Endothelial cell of umbilical vein (primary cell): ENCODE measurements at regions of chr20 and their contacts with region 1.

Region 1: DNA sequence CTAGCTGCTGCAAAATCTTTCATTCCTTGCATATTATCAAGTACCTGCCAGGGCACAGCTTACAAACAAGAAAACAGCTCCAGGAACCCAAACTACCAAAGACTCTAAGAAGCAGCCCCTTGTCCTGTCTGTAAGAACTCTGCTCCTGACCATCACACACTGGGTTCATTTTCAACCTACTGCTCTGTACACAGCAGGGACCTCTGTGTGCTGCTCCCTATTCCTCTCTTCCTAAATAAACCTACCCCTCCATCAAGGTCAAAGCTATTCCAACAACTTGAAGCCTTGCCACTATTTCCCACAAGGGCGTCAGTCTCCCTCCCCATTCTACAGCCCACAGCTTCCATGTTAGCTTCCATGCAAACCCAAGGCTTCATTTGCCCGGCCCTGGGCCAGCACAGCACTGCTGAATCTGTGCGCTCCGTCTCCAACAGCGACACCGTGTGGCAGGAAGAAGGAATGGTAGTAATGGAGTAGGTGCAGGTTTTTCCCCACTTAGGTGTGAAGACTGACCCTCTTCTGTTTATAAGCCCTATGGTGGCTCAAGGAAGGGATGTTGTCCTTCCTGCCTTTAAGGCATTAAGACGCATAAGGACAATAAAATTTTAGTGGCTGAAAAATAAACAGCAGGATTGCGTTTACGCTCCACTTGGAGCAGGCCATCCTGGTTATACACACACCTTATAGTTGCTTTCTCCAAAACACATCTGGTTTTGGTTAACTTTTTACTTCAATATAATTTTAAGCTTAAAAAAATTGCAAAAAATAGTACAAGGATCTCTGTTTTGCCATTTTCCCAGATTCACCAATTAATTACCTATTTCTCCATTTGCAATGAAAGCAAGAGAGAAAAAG is 115.2 kb upstream of the NXT1 start:
- DNase-seq: peak; percentile 72
- H3K4me3 ChIP-seq: no peak overlapping the region
- H3K27ac ChIP-seq: no peak overlapping the region
- H3K4me1 ChIP-seq: peaks cover 5% of the 10 kb centered on the region
- H3K27me3 ChIP-seq: peaks cover 2 to 4% of the 10 kb centered on the region in 2 experiments
- CTCF ChIP-seq: peak; percentile 80 to 85
- POLR2A ChIP-seq: no peak

Region 2: GRCh38 chr20:22368235-22368634 is 867.2 kb before region 1 on chr20:
- CTCF ChIA-PET with region 1: no interaction called
- POLR2A ChIA-PET with region 1: no interaction called
- dilution Hi-C with region 1: no loop called
- intact Hi-C with region 1: no loop called
- DNase-seq: no peak
- H3K4me3 ChIP-seq: no peak overlapping the region
- H3K27ac ChIP-seq: no peak overlapping the region
- H3K4me1 ChIP-seq: no peaks in the 10 kb centered on the region
- H3K27me3 ChIP-seq: peaks cover 0 to 1% of the 10 kb centered on the region in 2 experiments
- CTCF ChIP-seq: no peak
- POLR2A ChIP-seq: no peak

Region 3: GRCh38 chr20:22846863-22847262 is 388.5 kb before region 1 on chr20:
- CTCF ChIA-PET with region 1: interaction called, 12 read pairs
- POLR2A ChIA-PET with region 1: no interaction called
- dilution Hi-C with region 1: no loop called
- intact Hi-C with region 1: loop called (anchors 5 kb)
- DNase-seq: no peak
- H3K4me3 ChIP-seq: no peak overlapping the region
- H3K27ac ChIP-seq: no peak overlapping the region
- H3K4me1 ChIP-seq: peaks cover 4% of the 10 kb centered on the region
- H3K27me3 ChIP-seq: peaks cover 1 to 5% of the 10 kb centered on the region in 2 experiments
- CTCF ChIP-seq: no peak
- POLR2A ChIP-seq: no peak

Region 4: DNA sequence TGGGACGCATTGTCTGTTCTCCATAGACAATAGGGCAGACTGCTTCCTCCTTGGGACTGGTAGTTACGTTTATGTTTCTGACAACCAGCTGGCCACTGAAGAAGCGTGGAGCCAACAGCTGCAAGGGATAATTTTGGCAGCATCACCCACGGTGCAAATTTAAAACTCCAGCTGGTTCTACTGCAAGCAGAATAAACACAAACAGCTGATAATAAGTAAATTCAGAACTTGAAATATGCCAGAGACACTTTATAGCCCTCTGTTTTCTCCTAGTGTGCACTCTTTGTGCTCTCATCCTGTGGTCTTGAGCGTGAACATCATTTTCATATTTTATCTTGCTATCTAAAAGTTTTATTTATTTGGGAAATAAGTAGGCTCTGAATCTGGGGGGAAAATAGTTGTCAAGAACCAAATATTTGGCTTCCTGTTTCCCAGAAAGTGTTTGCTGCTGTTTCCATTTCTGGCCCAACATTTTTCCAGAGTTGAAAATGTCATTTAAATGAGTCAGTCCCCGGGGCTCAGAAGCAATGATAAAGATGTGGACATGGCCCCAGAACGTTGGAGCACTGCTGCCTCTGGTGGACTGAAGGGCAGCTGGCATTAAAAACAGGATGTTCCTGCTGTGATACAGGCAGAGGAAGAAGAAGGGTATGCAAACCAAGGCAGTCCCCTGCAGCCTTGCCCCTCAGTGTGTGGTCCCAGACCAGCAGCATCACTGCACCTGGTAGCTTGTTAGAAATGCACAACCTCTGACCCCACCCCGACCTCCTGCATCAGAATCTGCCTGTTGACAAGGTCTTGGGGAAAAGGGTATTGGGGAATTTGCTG is 173.5 kb before region 1 on chr20:
- CTCF ChIA-PET with region 1: interaction called, 13 read pairs
- POLR2A ChIA-PET with region 1: no interaction called
- dilution Hi-C with region 1: no loop called
- intact Hi-C with region 1: no loop called
- DNase-seq: peak; percentile 92
- H3K4me3 ChIP-seq: no peak overlapping the region
- H3K27ac ChIP-seq: peak overlapping the region; percentile 74
- H3K4me1 ChIP-seq: peaks cover 29% of the 10 kb centered on the region
- H3K27me3 ChIP-seq: no peaks in the 10 kb centered on the region
- CTCF ChIP-seq: peak; percentile 57 to 69
- POLR2A ChIP-seq: no peak

Region 5: GRCh38 chr20:23079016-23079351 is 156.4 kb before region 1 on chr20:
- CTCF ChIA-PET with region 1: interaction called, 19 read pairs
- POLR2A ChIA-PET with region 1: no interaction called
- dilution Hi-C with region 1: no loop called
- intact Hi-C with region 1: loop called (anchors 1 kb)
- DNase-seq: no peak
- H3K4me3 ChIP-seq: no peak overlapping the region
- H3K27ac ChIP-seq: no peak overlapping the region
- H3K4me1 ChIP-seq: peaks cover 52% of the 10 kb centered on the region
- H3K27me3 ChIP-seq: no peaks in the 10 kb centered on the region
- CTCF ChIP-seq: peak in 1 of 2 donors; percentile 15
- POLR2A ChIP-seq: no peak

Region 6: GRCh38 chr20:23147964-23148730 is 87.3 kb before region 1 on chr20:
- CTCF ChIA-PET with region 1: interaction called, 7 read pairs
- POLR2A ChIA-PET with region 1: no interaction called
- dilution Hi-C with region 1: no loop called
- intact Hi-C with region 1: loop called (anchors 5 kb)
- DNase-seq: peak; percentile 84
- H3K4me3 ChIP-seq: no peak overlapping the region
- H3K27ac ChIP-seq: peak overlapping the region; percentile 88
- H3K4me1 ChIP-seq: peaks cover 85% of the 10 kb centered on the region
- H3K27me3 ChIP-seq: no peaks in the 10 kb centered on the region
- CTCF ChIP-seq: no peak
- POLR2A ChIP-seq: no peak

Region 7: DNA sequence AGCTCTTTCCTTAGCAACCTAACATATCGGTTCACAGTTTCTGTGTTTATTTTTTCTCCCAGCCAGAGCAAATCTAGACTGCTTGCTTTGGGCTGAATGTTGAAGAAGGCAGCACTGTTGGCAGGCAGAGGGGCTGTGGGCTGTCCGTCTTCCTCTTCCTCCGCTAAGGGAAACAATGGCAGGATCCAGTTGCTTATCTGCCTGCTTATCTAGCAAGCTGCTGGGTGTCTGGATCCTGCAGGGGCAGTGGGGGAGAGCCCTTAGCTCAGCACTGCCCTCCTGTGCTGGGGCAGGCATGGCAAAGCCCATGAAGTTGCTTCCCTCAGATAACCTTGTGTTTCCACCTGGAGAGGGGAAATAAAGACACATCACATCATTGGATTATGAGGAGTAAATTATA is 56.6 kb before region 1 on chr20:
- CTCF ChIA-PET with region 1: interaction called, 11 read pairs
- POLR2A ChIA-PET with region 1: no interaction called
- dilution Hi-C with region 1: no loop called
- intact Hi-C with region 1: loop called (anchors 5 kb)
- DNase-seq: peak; percentile 96
- H3K4me3 ChIP-seq: no peak overlapping the region
- H3K27ac ChIP-seq: peak overlapping the region; percentile 56
- H3K4me1 ChIP-seq: peaks cover 21% of the 10 kb centered on the region
- H3K27me3 ChIP-seq: peaks cover 0 to 2% of the 10 kb centered on the region in 2 experiments
- CTCF ChIP-seq: peak; percentile 43 to 80
- POLR2A ChIP-seq: peak; percentile 49

Region 8: GRCh38 chr20:23245553-23246181 is 10.3 kb after region 1 on chr20:
- CTCF ChIA-PET with region 1: interaction called, 15 read pairs
- POLR2A ChIA-PET with region 1: no interaction called
- dilution Hi-C with region 1: no loop called
- intact Hi-C with region 1: no loop called
- DNase-seq: peak; percentile 77
- H3K4me3 ChIP-seq: no peak overlapping the region
- H3K27ac ChIP-seq: no peak overlapping the region
- H3K4me1 ChIP-seq: no peaks in the 10 kb centered on the region
- H3K27me3 ChIP-seq: no peaks in the 10 kb centered on the region
- CTCF ChIP-seq: peak; percentile 67 to 88
- POLR2A ChIP-seq: no peak

Region 9: DNA sequence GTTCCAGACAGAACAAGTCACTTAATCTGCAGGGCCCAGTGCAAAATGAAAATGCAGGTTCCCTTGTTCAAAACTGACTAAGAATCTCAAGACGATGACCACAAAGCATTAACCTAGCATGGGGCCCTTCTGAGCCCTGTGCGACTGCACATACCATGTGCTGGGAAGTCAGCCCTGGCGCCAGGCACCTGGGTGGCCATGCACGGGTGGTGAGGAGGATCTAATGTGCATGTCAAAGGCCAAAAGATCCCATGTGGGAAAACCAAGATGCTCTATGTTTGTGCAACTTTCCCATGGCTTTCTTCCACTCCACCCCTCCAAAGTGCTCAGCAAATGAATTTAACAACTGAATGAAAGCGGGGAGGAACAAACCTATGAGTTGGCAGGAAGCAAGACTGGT is 81.7 kb after region 1 on chr20:
- CTCF ChIA-PET with region 1: no interaction called
- POLR2A ChIA-PET with region 1: no interaction called
- dilution Hi-C with region 1: no loop called
- intact Hi-C with region 1: no loop called
- DNase-seq: no peak
- H3K4me3 ChIP-seq: no peak overlapping the region
- H3K27ac ChIP-seq: no peak overlapping the region
- H3K4me1 ChIP-seq: peaks cover 10% of the 10 kb centered on the region
- H3K27me3 ChIP-seq: no peaks in the 10 kb centered on the region
- CTCF ChIP-seq: no peak
- POLR2A ChIP-seq: no peak